ENCODE measurements at regions of chr17 and their contacts with region 1.

Region 1: DNA sequence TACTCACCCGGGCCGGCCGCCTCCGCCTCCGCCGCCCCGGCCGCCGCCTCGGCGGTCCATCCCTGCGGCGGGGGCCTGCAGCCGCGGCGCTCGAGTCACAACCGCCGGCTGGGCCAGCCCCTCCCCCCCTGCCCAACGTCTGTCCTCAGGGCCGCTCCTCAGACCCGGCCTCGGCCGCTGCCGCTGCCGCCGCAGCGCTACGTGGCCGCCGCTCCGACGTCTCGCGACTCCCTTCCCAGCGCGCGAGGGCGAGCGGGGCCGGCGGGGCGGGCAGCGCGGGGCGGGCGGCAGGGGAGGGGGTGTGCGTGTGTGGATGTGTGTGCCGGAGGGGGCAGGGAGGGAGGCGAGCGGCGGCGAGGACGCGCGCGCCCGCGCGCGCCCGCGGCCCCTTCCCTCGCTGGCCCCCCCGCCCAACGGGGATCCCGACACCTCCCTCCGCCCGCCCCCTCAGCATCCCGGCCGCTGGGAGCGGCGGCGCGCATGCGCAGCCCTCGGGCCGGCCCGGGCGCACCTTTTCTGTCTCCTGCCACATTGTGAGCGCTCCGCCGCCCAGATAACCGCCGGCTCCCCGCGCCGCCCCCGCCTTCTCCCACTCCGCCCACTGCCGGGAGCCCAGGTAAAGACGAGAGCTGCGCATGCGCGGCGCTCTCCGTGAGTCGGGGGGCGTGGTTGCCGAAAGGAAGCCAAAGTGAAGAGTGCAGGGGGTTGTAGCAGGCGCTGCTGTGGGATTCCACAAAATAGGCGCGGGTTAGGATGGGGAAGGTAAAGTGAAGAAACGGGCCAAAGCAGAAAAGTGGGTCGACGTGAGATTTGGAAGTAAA is at the start of gene ZNF652:
- DNase-seq: peak; percentile 86 to 98 (median 97)
- ATAC-seq: peak; percentile 81
- H3K4me3 ChIP-seq: peak within 1 kb of the TSS; percentile 67
- H3K4me3 Mint-ChIP-seq: peak within 1 kb of the TSS; percentile 88 to 99 (median 96)
- H3K27ac ChIP-seq: peak within 1 kb of the TSS; percentile 71
- H3K27ac Mint-ChIP-seq: peak within 1 kb of the TSS; percentile 92 to 97 (median 97)
- H3K4me1 ChIP-seq: peaks cover 26 to 33% of the 10 kb centered on the region in 2 donors
- H3K4me1 Mint-ChIP-seq: peaks cover 48 to 58% (median 53%) of the 10 kb centered on the region in 7 donors
- H3K27me3 ChIP-seq: no peaks in the 10 kb centered on the region
- H3K27me3 Mint-ChIP-seq: no peaks in the 10 kb centered on the region
- total RNA-seq, gene ZNF652: 33.8 to 64.4 (median 49.9) TPM

Region 2: DNA sequence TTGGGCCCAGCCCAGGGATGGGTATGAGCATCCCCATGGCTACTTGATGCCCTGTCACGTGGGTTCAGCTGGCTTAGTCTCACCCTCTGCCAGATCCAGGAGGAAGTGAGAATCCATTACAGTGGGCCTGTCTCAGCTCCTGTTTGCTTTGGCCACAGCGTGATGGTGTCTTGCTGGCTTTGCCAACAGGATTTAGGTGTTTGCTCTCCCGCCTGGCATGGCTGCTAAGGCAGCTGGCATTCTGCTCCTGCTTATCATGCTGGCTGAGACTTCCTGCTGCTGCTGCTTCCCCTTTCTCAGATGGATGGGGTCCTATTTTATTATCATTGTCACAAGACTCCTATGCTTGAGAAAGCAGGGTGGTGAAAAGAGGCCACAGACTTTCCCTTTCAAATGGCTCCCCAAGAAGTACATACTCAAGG is 605.3 kb before region 1 on chr17:
- CTCF ChIA-PET with region 1: no interaction called
- POLR2A ChIA-PET with region 1: no interaction called
- intact Hi-C with region 1: no loop called
- DNase-seq: no peak
- ATAC-seq: no peak
- H3K4me3 ChIP-seq: no peak overlapping the region
- H3K4me3 Mint-ChIP-seq: no peak overlapping the region
- H3K27ac ChIP-seq: no peak overlapping the region
- H3K27ac Mint-ChIP-seq: no peak overlapping the region
- H3K4me1 ChIP-seq: peaks cover 5 to 13% of the 10 kb centered on the region in 2 donors
- H3K4me1 Mint-ChIP-seq: peaks cover 3 to 21% (median 18%) of the 10 kb centered on the region in 7 donors
- H3K27me3 ChIP-seq: peaks cover 18 to 43% of the 10 kb centered on the region in 2 donors
- H3K27me3 Mint-ChIP-seq: peaks cover 79 to 88% (median 84%) of the 10 kb centered on the region in 5 donors

Region 3: GRCh38 chr17:49315551-49316257 is 46.4 kb before region 1 on chr17:
- CTCF ChIA-PET with region 1: interaction called, 69 read pairs
- POLR2A ChIA-PET with region 1: interaction called, 39 read pairs
- intact Hi-C with region 1: loop called (anchors 1 to 2 kb)
- DNase-seq: peak; percentile 41 to 83 (median 75)
- ATAC-seq: peak; percentile 99
- H3K4me3 ChIP-seq: no peak overlapping the region
- H3K4me3 Mint-ChIP-seq: peak overlapping the region; percentile 3 to 86 (median 78)
- H3K27ac ChIP-seq: no peak overlapping the region
- H3K27ac Mint-ChIP-seq: peak overlapping the region; percentile 44 to 94 (median 70)
- H3K4me1 ChIP-seq: no peaks in the 10 kb centered on the region
- H3K4me1 Mint-ChIP-seq: peaks cover 16 to 40% (median 36%) of the 10 kb centered on the region in 7 donors
- H3K27me3 ChIP-seq: no peaks in the 10 kb centered on the region
- H3K27me3 Mint-ChIP-seq: no peaks in the 10 kb centered on the region

Region 4: GRCh38 chr17:49343273-49343672 is 18.8 kb before region 1 on chr17:
- CTCF ChIA-PET with region 1: interaction called, 7 read pairs
- POLR2A ChIA-PET with region 1: interaction called, 57 read pairs
- intact Hi-C with region 1: loop called (anchors 1 kb)
- DNase-seq: peak in 4 of 9 donors; percentile 12 to 35 (median 26)
- ATAC-seq: no peak
- H3K4me3 ChIP-seq: peak overlapping the region; percentile 10
- H3K4me3 Mint-ChIP-seq: peak overlapping the region; percentile 35 to 85 (median 79)
- H3K27ac ChIP-seq: no peak overlapping the region
- H3K27ac Mint-ChIP-seq: peak overlapping the region; percentile 6 to 90 (median 72)
- H3K4me1 ChIP-seq: peaks cover 13 to 51% of the 10 kb centered on the region in 2 donors
- H3K4me1 Mint-ChIP-seq: peaks cover 39 to 82% (median 68%) of the 10 kb centered on the region in 7 donors
- H3K27me3 ChIP-seq: no peaks in the 10 kb centered on the region
- H3K27me3 Mint-ChIP-seq: peaks cover 0 to 9% (median 0%) of the 10 kb centered on the region in 5 donors

Region 5: DNA sequence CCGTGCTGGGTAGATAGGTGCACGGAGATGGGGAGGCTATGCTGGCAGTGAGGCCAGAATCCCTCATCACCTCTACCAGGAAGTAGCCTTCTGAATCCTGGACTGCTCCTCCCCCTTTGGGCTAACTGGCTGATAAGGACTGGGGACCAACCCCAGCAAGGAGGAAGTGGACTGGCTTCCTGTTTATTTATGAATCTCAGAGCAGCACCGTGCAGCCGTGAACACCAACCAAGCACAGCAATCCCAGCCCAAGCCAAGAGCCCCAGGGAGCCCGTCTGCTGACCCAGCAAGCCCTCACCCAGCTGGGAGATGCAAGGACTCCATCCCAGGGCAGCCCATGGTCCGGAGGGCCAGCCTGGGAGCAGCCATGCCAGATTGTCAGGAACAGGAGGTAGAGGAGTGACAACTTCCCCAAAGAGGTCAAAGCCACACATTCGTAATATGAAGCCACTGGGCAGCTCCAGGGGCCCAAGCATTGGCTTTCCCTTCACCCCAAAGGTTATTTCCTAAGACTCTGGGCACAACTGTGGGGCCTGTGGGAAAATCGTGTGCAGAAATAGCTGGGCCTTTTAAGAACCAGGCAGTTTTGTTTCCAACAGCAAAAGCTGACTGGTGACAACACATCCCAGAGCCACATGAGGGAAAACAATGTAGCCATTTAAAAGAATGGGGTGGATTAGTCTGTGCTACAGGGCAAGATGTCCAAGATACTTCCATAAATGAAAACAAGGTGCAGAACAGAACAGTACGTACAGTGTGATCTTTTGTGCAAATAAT is 28.6 kb after region 1 on chr17:
- CTCF ChIA-PET with region 1: interaction called, 6 read pairs
- POLR2A ChIA-PET with region 1: interaction called, 18 read pairs
- intact Hi-C with region 1: loop called in 1 of 2 experiments (anchors 1 kb)
- DNase-seq: no peak
- ATAC-seq: peak; percentile 48
- H3K4me3 ChIP-seq: peak overlapping the region; percentile 29
- H3K4me3 Mint-ChIP-seq: peak overlapping the region; percentile 21 to 83 (median 58)
- H3K27ac ChIP-seq: no peak overlapping the region
- H3K27ac Mint-ChIP-seq: peak overlapping the region; percentile 44 to 93 (median 71)
- H3K4me1 ChIP-seq: peaks cover 43 to 51% of the 10 kb centered on the region in 2 donors
- H3K4me1 Mint-ChIP-seq: peaks cover 48 to 70% (median 63%) of the 10 kb centered on the region in 7 donors
- H3K27me3 ChIP-seq: no peaks in the 10 kb centered on the region
- H3K27me3 Mint-ChIP-seq: no peaks in the 10 kb centered on the region

Region 6: DNA sequence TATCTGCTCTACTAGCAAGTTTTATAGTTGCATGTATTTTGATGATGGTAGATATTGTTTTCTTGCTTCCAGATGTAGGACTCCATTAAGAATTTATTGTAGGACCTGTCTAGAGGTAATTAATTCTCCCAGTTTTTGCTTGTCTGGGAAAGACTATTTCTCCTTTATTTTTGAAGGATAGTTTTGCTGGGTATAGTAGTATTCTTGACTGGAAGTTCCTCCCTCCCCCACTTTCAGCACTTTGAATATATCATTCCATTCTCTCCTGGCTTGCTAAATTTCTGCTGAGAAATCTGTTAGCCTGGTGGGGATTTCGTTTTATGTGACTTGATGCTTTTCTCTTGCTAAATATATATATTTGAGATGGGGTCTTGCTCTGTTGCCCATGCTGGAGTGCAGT is 60.6 kb after region 1 on chr17:
- CTCF ChIA-PET with region 1: no interaction called
- POLR2A ChIA-PET with region 1: no interaction called
- intact Hi-C with region 1: no loop called
- DNase-seq: no peak
- ATAC-seq: no peak
- H3K4me3 ChIP-seq: no peak overlapping the region
- H3K4me3 Mint-ChIP-seq: no peak overlapping the region
- H3K27ac ChIP-seq: no peak overlapping the region
- H3K27ac Mint-ChIP-seq: no peak overlapping the region
- H3K4me1 ChIP-seq: no peaks in the 10 kb centered on the region
- H3K4me1 Mint-ChIP-seq: no peaks in the 10 kb centered on the region
- H3K27me3 ChIP-seq: no peaks in the 10 kb centered on the region
- H3K27me3 Mint-ChIP-seq: peaks cover 11 to 27% (median 17%) of the 10 kb centered on the region in 5 donors

Region 7: DNA sequence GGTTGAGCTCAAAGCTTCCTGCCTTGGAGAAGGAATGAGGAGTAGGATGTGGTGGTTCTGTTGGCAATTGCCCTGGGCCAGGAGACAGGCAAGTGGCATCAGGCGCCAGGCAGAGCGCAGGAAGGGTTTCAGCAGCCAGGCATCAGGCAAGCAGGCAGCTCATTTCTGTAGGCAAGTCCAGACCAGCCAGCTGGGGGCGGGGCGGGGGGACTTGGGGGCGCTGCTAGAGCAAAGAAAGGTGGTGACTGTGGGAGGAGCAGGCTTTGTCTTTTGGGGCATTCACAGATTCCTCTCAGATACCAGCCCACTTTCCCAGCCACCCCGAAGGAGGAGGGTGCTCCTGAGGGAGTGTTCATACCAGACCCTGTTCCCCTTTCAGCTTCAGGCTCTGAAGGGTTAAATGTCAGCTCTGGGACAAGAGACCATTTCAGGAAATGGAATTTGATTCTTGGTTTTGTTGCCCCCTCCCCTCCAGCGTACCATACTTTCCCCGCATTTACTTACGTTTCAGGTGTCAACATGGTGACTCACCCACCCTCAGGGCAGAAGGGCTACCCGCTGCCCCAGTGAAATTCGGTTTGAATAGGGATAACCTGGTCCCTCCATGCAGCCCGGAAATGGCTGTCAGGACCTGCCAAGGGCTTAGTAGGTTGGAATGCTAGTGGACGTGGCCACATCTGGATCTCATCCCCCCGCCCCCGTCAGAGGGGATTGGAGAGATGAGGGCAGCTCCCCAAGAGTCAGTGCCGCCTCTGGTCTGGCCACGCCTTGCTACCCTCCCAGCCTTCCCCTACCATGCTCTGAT is 146.2 kb after region 1 on chr17:
- CTCF ChIA-PET with region 1: no interaction called
- POLR2A ChIA-PET with region 1: no interaction called
- intact Hi-C with region 1: no loop called
- DNase-seq: no peak
- ATAC-seq: no peak
- H3K4me3 ChIP-seq: no peak overlapping the region
- H3K4me3 Mint-ChIP-seq: no peak overlapping the region
- H3K27ac ChIP-seq: no peak overlapping the region
- H3K27ac Mint-ChIP-seq: no peak overlapping the region
- H3K4me1 ChIP-seq: no peaks in the 10 kb centered on the region
- H3K4me1 Mint-ChIP-seq: peaks cover 0 to 1% (median 0%) of the 10 kb centered on the region in 7 donors
- H3K27me3 ChIP-seq: peaks cover 0 to 13% of the 10 kb centered on the region in 2 donors
- H3K27me3 Mint-ChIP-seq: peaks cover 17 to 47% (median 42%) of the 10 kb centered on the region in 5 donors

Region 8: DNA sequence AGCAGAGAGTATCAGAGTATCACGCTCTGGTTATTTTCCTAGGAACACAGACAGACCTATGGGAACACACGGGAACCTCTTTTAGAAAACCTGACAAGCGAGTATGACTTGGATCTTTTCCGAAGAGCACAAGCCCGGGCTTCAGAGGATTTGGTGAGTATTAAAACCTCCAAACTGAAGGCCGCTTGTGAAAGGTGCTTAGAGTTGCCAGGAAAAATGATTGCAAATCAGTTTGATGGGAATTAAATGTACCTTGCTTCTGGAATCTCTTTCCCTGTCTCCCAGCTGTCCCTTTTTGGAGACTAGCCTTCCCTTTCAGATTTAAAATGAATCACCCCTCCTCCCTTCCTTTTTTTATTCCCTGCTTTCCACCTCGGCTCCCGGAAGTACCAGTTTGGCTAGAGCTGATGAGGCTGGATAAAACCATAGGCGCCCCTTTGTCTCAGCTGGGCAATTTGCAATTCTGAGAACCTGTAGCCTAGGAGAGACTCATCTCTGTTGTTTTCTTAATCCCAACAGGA is 453.7 kb after region 1 on chr17:
- CTCF ChIA-PET with region 1: no interaction called
- POLR2A ChIA-PET with region 1: no interaction called
- intact Hi-C with region 1: loop called in 1 of 2 experiments (anchors 5 kb)
- DNase-seq: no peak
- ATAC-seq: no peak
- H3K4me3 ChIP-seq: no peak overlapping the region
- H3K4me3 Mint-ChIP-seq: peak overlapping the region in 5 of 10 donors; percentile 43 to 85 (median 67)
- H3K27ac ChIP-seq: peak overlapping the region; percentile 55
- H3K27ac Mint-ChIP-seq: peak overlapping the region; percentile 78 to 99 (median 96)
- H3K4me1 ChIP-seq: peaks cover 36 to 60% of the 10 kb centered on the region in 2 donors
- H3K4me1 Mint-ChIP-seq: peaks cover 32 to 79% (median 73%) of the 10 kb centered on the region in 7 donors
- H3K27me3 ChIP-seq: no peaks in the 10 kb centered on the region
- H3K27me3 Mint-ChIP-seq: no peaks in the 10 kb centered on the region

Measured in naive thymus-derived CD4-positive, alpha-beta T cell (primary cell).